Ascending aorta (tissue), 2 donors: ENCODE measurements at regions of chr20 and their contacts with region 1.

Region 1: GRCh38 chr20:58309575-58310290 is at the start of gene RAB22A:
- DNase-seq: peak in 1 of 2 donors; percentile 89
- H3K4me3 ChIP-seq: peak within 1 kb of the TSS; percentile 80 to 90
- H3K27ac ChIP-seq: peak within 1 kb of the TSS; percentile 78 to 82
- H3K4me1 ChIP-seq: peaks cover 0 to 6% of the 10 kb centered on the region in 2 donors
- H3K27me3 ChIP-seq: no peaks in the 10 kb centered on the region
- CTCF ChIP-seq: no peak
- total RNA-seq, gene RAB22A: 17.8 TPM

Region 2: GRCh38 chr20:58246346-58246745 is 63.4 kb before region 1 on chr20:
- intact Hi-C with region 1: no loop called
- DNase-seq: no peak
- H3K4me3 ChIP-seq: no peak overlapping the region
- H3K27ac ChIP-seq: no peak overlapping the region
- H3K4me1 ChIP-seq: no peaks in the 10 kb centered on the region
- H3K27me3 ChIP-seq: no peaks in the 10 kb centered on the region
- CTCF ChIP-seq: no peak

Region 3: DNA sequence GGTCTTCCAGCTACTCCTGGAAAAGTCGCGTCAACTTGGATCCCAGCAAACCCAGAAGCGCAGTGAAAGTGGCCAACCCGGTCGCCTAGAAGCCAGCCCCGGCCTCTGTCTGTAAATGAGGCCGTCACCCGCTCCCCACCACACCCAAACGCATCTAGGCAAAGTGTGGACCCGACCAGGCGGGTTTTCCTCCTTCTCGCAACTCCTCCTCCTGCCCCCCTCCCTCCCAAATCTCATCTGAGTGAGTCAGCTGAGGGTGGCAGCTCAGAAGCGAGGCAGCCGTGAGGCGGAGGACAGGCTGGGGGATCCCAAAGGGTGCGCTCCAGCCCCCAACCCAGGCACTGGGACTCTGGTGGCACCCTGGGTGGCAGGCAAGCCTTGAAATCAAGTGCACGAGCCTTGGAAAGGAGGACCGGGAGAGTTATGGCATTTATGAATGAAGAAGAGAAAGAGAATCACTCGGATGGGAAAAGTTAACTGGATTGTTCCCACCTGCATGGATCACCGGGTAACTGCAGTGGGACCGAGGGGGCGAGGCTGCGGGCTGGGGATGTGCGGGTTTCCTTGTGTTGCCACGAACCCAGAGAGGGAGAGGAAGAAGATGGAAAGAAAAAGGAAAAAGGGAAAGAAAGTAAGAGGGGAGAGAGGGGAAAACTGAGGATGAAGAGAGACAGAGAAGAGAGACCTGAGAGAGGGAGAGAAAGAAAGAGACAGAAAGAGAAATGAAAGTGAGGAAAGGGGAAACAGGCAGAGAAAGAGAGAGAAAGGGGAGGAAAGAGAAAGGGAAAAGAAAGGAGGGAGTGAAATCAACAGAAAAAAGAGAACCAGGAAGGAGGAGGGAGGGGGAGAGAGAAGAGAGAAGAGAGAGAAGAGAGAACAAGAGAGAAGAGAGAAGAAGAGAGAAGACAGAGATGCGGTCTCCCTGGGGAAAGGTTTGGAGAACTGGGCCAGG is 205.8 kb after region 1 on chr20 and contains the start of gene APCDD1L:
- intact Hi-C with region 1: loop called (anchors 5 kb)
- DNase-seq: peak in 1 of 2 donors; percentile 76
- H3K4me3 ChIP-seq: peak within 1 kb of the TSS; percentile 41 to 63
- H3K27ac ChIP-seq: peak within 1 kb of the TSS; percentile 2 to 48
- H3K4me1 ChIP-seq: peaks cover 7 to 15% of the 10 kb centered on the region in 2 donors
- H3K27me3 ChIP-seq: no peaks in the 10 kb centered on the region
- CTCF ChIP-seq: no peak
- total RNA-seq, gene APCDD1L: 2.1 TPM

Region 4: GRCh38 chr20:59940174-59940971 is 1630.6 kb after region 1 on chr20 and contains the starts of genes FAM217B and PPP1R3D:
- intact Hi-C with region 1: loop called (anchors 5 kb)
- DNase-seq: peak; percentile 95 to 99
- H3K4me3 ChIP-seq: peak within 1 kb of the TSS; percentile 79 to 88
- H3K27ac ChIP-seq: peak within 1 kb of the TSS; percentile 92 to 94
- H3K4me1 ChIP-seq: peaks cover 14 to 31% of the 10 kb centered on the region in 2 donors
- H3K27me3 ChIP-seq: no peaks in the 10 kb centered on the region
- CTCF ChIP-seq: peak in 1 of 3 experiments; percentile 3
- total RNA-seq, gene FAM217B: 2.6 TPM
- total RNA-seq, gene PPP1R3D: 3.2 TPM